ENCODE measurements at regions of chr1 and their contacts with region 1.

Region 1: DNA sequence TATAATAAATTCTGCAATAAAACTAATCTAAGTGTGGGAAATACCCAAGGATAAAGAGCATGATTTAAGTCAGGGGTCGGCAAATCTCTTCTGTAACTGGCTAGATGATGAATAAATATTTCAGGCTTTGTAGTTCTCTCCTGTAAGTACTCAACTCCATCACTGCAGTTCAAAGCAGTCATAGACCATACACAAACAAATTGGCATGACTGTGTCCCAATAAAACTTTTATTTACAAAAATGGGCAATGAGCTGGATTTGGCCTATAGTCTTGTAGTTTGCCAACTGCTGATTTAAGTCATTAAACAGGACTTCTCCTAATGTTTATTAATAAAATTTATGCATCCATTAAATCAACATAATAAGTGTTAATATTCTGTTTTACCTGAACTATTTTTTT is 49.4 kb downstream of the EDEM3 start:
- DNase-seq: no peak
- ATAC-seq: no peak
- H3K4me3 ChIP-seq: no peak overlapping the region
- H3K27ac ChIP-seq: no peak overlapping the region
- H3K4me1 ChIP-seq: peaks cover 0 to 7% (median 0%) of the 10 kb centered on the region in 9 donors
- H3K27me3 ChIP-seq: no peaks in the 10 kb centered on the region
- CTCF ChIP-seq: no peak

Region 2: DNA sequence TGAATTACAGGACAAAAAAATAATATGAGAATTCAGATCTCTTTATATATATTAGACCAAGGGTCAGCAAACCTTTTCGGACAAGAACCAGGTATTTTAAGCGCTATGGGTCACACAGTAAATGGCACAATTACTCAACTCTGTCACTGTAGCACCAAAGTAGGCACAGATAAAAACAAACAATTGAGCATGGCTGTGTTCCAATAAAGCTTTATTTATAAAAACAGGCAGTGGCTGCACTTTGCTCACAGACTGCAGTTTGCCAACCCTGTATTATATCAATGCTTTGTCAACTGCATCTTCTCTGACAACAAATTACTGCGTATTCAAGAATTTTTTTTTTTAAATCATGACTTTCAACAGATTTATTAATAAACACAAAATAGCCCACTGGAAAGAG is 19.6 kb after region 1 on chr1:
- intact Hi-C with region 1: loop called in 1 of 10 experiments (anchors 1 kb)
- DNase-seq: no peak
- ATAC-seq: no peak
- H3K4me3 ChIP-seq: no peak overlapping the region
- H3K27ac ChIP-seq: no peak overlapping the region
- H3K4me1 ChIP-seq: no peaks in the 10 kb centered on the region
- H3K27me3 ChIP-seq: no peaks in the 10 kb centered on the region
- CTCF ChIP-seq: no peak

Region 3: DNA sequence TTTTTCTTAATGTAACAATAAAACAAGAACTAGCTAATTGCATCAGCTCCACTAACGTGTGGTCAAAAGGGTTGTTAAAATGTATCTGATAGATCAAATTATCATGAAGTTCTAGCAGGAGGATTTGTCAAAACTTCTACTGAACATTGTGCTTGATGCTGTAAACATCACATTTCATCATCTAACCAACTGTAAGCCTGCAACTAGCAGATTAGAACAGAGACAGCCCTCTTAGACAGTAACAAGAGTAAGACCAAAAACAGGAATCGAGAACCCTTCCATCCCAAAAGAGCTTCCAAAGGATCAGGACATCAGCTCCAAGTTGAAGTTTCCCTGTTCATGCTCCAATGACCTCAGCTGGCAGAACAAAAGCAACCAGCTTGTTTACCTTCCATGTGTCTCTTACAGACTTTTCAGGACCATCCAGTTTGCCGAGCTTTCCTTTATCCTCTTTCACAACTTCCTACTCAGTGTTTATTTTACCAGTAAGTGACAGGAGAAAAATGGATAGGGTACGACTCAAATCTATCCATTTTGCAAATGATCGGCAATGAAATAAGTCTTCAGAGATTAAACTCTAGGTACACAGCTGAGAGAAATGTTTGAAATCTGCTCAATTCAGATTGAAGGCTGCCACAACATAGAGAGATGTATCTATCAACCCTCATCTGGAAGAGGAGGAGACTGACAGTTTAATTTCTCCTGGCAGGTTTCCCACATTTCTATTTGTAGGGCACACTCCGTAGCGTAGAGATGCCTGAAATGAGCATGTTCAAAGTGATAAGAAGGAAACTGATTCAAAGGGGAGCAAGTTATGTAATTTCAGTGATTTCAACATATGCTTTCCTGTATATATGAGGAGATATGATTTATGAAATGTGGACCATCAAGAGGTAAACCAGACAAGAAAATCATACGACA is 224.7 kb after region 1 on chr1:
- intact Hi-C with region 1: no loop called
- DNase-seq: no peak
- ATAC-seq: peak in 3 of 8 donors; percentile 21 to 52 (median 26)
- H3K4me3 ChIP-seq: no peak overlapping the region
- H3K27ac ChIP-seq: peak overlapping the region in 2 of 10 donors; percentile 21 to 49
- H3K4me1 ChIP-seq: peaks cover 0 to 54% (median 33%) of the 10 kb centered on the region in 9 donors
- H3K27me3 ChIP-seq: no peaks in the 10 kb centered on the region
- CTCF ChIP-seq: no peak

Measured in heart right ventricle (tissue), 16 donors.